MCF 10A (cell line): ENCODE measurements at regions of chr1 and their contacts with region 1.

Region 1: GRCh38 chr1:167220537-167221125 is at the start of gene POU2F1:
- DNase-seq: peak; percentile 100
- H3K4me3 Mint-ChIP-seq: peak within 1 kb of the TSS; percentile 100
- H3K27ac Mint-ChIP-seq: peak within 1 kb of the TSS; percentile 100
- H3K4me1 Mint-ChIP-seq: peaks cover 34% of the 10 kb centered on the region
- H3K27me3 Mint-ChIP-seq: no peaks in the 10 kb centered on the region
- CTCF ChIP-seq: peak; percentile 60
- total RNA-seq, gene POU2F1: 11.6 and 16.7 TPM in 2 replicates

Region 2: DNA sequence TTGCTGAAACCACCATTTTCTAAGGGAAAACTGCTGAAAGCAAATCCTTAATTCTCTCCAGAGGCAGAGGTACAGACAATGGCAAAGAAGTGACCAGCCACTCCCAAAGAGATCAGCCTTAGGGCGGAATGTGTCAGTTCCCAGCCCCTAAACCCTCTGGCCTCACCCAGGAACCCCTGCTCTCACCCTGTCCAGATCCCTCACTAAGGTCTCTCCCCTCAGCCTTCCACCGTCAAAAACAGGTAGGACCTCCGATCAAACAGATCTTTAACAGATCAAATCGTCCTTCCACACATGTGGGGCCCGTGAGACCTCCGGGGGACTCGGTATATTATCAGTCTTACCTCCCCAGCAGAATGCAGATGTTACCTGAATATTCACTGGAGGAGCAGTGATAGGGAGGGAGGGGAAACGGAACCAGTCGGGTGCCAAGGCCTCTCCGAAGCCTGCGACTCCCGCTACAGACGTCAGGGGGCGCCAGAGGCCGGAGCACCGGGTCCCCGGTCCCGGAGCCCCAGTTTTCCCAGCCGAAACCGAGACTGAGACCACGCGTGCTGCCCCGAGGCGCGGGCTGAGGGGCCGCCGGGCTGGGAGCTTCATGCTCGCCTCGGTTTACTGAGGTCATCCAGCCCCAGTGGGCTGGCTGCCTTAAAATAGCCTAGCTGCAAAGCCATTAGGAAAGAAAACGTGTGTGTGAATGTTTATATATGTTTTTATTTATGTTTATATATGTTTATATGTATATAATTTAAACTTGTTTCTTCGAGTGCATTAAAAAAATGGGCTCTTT is 154.1 kb before region 1 on chr1:
- CTCF ChIA-PET with region 1: interaction called, 190 read pairs
- POLR2A ChIA-PET with region 1: interaction called, 29 read pairs
- intact Hi-C with region 1: loop called (anchors 1 kb)
- DNase-seq: peak; percentile 84
- H3K4me3 Mint-ChIP-seq: peak overlapping the region; percentile 32
- H3K27ac Mint-ChIP-seq: peak overlapping the region; percentile 43
- H3K4me1 Mint-ChIP-seq: no peaks in the 10 kb centered on the region
- H3K27me3 Mint-ChIP-seq: peaks cover 18% of the 10 kb centered on the region
- CTCF ChIP-seq: peak; percentile 100

Region 3: DNA sequence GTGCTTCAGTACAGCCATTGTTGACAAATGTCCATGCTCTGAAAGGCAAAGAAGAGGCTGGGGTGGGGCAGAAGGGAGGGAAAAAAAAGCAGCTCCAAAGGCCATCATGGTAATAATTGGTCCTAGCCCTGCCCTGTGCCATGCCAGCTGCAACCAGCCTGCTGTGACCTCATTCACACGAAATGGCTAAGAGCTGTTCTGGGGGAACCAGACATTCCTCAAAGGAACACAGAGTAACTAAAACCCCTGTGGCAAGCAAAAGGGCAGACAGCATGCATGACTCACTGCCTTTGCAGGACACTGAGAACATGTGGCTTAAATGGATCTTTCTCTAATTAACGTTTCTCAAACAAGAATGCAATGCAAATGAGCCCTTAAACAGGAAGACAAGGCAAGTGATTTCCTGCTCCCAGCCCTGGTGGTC is 84.4 kb before region 1 on chr1:
- CTCF ChIA-PET with region 1: interaction called, 10 read pairs
- POLR2A ChIA-PET with region 1: interaction called, 21 read pairs
- intact Hi-C with region 1: no loop called
- DNase-seq: peak; percentile 85
- H3K4me3 Mint-ChIP-seq: no peak overlapping the region
- H3K27ac Mint-ChIP-seq: no peak overlapping the region
- H3K4me1 Mint-ChIP-seq: peaks cover 21% of the 10 kb centered on the region
- H3K27me3 Mint-ChIP-seq: no peaks in the 10 kb centered on the region
- CTCF ChIP-seq: no peak

Region 4: GRCh38 chr1:167263819-167264464 is 43.3 kb after region 1 on chr1:
- CTCF ChIA-PET with region 1: interaction called, 19 read pairs
- POLR2A ChIA-PET with region 1: interaction called, 29 read pairs
- intact Hi-C with region 1: no loop called
- DNase-seq: no peak
- H3K4me3 Mint-ChIP-seq: no peak overlapping the region
- H3K27ac Mint-ChIP-seq: no peak overlapping the region
- H3K4me1 Mint-ChIP-seq: peaks cover 4% of the 10 kb centered on the region
- H3K27me3 Mint-ChIP-seq: no peaks in the 10 kb centered on the region
- CTCF ChIP-seq: no peak

Region 5: DNA sequence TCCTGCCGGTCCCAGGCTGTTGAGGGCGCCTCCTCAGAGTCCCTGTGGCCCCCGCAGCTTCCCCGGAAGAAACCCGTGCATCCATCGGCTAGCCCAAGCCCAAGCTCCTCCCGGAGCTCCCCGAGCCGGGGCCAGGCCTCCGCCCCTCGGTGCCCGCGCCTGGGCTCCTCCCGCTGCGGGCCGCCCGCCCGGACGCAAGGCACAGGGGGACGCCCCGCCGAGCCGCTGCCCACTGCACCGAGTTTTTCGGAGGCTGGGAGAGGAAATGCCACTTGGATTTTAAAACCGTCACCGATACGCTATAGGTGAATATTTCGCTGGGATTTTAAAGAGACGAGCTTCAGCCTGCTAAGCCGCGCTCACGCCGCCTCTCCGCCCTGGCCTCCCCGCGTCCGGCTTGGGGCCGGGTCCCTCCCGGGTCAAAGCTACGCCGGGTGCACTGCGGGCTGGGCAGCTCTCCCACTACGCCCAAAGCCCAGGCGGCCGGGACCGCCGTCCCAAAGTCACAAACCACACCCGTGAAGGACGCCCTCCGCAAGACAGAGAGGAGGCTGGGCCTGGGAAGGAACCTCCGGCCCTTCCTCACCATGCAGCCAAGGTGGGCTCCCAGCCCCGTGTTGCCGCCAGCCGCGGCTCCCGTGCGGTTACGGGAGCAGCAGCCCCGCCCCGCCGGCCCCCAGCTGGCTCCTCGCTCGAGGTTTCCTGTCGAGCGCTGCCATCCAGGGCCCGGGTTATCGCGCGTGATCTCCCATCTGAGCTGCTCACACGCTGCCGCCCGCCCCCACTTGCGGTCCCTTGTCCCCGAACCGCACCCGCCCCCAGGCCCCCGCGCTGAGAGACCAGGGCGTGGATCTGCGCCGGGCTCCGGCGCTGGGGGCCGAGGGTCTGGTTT is 234.5 kb after region 1 on chr1:
- CTCF ChIA-PET with region 1: interaction called, 7 read pairs
- POLR2A ChIA-PET with region 1: interaction called, 12 read pairs
- intact Hi-C with region 1: no loop called
- DNase-seq: peak; percentile 57
- H3K4me3 Mint-ChIP-seq: peak overlapping the region; percentile 71
- H3K27ac Mint-ChIP-seq: no peak overlapping the region
- H3K4me1 Mint-ChIP-seq: no peaks in the 10 kb centered on the region
- H3K27me3 Mint-ChIP-seq: no peaks in the 10 kb centered on the region
- CTCF ChIP-seq: no peak

Region 6: GRCh38 chr1:167553136-167554027 is 332.8 kb after region 1 on chr1 and contains the start of gene CREG1:
- CTCF ChIA-PET with region 1: interaction called, 3 read pairs
- POLR2A ChIA-PET with region 1: interaction called, 15 read pairs
- intact Hi-C with region 1: loop called (anchors 5 kb)
- DNase-seq: peak; percentile 98
- H3K4me3 Mint-ChIP-seq: peak within 1 kb of the TSS; percentile 87
- H3K27ac Mint-ChIP-seq: peak within 1 kb of the TSS; percentile 36
- H3K4me1 Mint-ChIP-seq: peaks cover 59% of the 10 kb centered on the region
- H3K27me3 Mint-ChIP-seq: no peaks in the 10 kb centered on the region
- CTCF ChIP-seq: no peak
- total RNA-seq, gene CREG1: 136 and 154 TPM in 2 replicates